ENCODE measurements at regions of chr20 and their contacts with region 1.

Region 1: DNA sequence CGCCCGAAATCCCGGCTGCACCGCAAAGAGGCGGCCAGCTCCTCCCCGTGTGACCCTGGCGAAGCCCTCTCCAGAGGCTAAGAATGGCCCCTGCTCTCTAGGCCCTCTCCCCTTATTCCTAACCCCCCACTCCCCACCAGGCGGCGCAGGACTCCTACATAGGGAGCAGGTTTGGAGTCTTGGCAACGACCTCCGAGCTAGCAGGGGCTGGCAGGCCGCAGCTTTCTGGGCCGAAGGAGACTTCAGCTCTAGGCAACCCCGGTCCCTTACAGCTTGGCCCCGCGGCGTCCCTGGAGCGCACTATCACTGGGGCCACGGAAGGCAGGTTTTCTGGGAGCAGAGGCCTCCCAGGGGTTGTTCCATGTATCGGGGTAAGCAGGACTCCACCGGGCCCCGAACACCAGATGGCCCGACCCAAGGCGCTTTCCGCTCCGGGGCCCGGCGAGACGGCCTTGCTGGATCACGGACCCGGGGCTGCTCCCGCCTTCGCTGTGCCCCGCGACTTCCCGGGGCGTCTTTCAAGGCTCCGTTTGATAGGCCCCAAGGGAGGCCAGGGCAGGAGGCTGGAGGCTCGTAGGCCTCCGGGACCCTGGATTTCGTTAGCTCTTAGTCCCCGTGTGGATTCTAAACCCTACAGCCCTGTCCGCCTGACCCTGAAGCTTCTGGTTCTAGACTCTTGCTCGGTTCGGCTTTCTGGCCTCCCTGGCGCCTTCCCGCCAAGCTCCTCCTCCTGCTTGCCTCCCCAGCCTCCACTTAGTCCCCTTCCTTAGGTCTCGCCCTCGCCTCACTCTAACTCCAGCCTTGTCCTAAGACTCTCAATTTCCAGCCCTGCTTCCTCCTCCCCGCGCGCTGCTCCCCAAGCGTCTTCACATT is 1.9 kb downstream of the SLC32A1 start:
- DNase-seq: peak in 1 of 2 donors; percentile 78
- ATAC-seq: no peak
- H3K4me3 ChIP-seq: no peak overlapping the region
- H3K27ac ChIP-seq: no peak overlapping the region
- H3K4me1 ChIP-seq: no peaks in the 10 kb centered on the region
- H3K27me3 ChIP-seq: no peaks in the 10 kb centered on the region

Region 2: DNA sequence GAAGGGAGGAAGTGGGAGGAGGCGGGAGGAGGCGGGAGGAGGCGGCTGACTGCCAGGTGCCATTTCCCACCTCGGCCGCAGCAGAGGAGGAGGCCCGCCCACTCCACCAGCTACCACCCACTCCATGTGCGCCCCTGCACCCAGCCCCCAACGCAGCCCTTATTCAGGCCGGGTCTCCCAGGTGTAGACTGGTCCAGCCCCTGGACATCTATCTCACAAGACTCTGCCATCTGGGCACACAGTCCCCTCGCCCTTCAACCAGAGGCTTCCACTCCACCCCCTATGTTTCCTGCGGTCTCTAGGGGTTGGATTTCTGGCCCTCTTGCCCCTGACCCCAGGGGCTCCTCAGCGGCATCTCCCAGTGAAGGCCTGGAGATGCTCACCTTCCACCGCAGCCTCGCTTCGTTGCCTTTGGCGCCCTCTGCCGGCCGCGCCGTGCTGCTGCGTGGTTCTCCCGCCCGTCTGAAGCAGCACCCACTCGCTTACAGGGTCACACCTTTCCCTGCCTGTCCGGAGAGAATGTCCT is 167.5 kb after region 1 on chr20:
- intact Hi-C with region 1: loop called in 1 of 2 experiments (anchors 10 kb)
- DNase-seq: peak; percentile 69 to 89
- ATAC-seq: peak; percentile 83
- H3K4me3 ChIP-seq: no peak overlapping the region
- H3K27ac ChIP-seq: no peak overlapping the region
- H3K4me1 ChIP-seq: no peaks in the 10 kb centered on the region
- H3K27me3 ChIP-seq: no peaks in the 10 kb centered on the region

Measured in aorta (tissue), 5 donors.